ENCODE measurements at regions of chr4 and their contacts with region 1.

Region 1: DNA sequence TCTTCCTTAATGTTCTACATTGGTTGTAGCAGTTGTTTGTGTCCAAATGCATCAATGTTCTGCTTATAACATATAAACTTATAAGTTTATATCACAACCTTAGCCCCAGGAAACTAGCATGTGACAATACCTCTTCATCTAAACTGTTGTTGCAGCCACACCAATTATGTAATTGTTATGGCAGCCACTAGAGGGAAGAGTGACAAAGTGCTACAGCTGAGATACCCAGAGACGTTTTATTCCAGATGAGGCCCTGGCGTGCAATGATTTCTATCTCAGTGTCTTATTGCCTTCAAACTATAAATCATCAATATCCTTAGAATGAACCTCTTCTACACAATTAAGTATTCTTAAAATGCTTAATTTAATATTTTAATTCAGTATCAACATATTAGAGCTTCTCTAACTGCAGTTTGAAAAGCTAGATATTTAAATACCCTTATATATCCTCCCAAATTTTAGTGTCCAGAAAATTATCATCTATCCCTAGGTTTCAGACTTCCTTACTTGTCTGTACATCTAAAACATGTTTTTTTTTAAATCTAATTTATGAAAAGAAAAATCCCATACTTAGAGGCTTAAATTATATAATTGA is 171.6 kb downstream of the PCDH10 start:
- DNase-seq: no peak
- ATAC-seq: peak; percentile 87
- H3K4me3 ChIP-seq: no peak overlapping the region
- H3K27ac ChIP-seq: no peak overlapping the region
- H3K4me1 ChIP-seq: no peaks in the 10 kb centered on the region
- H3K27me3 ChIP-seq: no peaks in the 10 kb centered on the region
- CTCF ChIP-seq: peak; percentile 56 to 60 (median 57)
- EP300 ChIP-seq: no peak
- POLR2A ChIP-seq: no peak
- RAD21 ChIP-seq: peak; percentile 44; the same call in 1 of the 2 replicates

Region 2: DNA sequence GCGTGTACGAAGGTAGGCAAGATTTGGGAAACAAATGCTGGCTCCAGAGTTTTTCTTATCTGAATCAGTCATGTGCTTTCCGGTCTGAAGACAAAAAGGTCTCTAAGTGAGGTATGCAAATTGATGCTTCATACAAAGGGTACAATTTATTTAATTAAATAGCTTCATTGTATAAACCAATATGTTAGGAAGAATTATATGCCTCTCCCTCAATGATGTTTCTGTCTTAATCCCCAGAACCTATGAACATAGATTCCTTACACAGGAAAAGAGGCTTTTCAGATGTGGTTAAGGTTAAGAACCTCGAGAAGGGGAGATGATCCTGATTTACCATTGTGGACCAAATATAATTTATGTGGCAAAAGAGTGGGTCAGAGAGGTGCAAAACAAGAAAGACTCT is 715.1 kb before region 1 on chr4:
- CTCF ChIA-PET with region 1: no interaction called
- POLR2A ChIA-PET with region 1: no interaction called
- RAD21 ChIA-PET with region 1: no interaction called
- SMC1A ChIA-PET with region 1: no interaction called
- in situ Hi-C with region 1: no loop called
- intact Hi-C with region 1: no loop called
- DNase-seq: no peak
- ATAC-seq: no peak
- H3K4me3 ChIP-seq: no peak overlapping the region
- H3K27ac ChIP-seq: no peak overlapping the region
- H3K4me1 ChIP-seq: no peaks in the 10 kb centered on the region
- H3K27me3 ChIP-seq: no peaks in the 10 kb centered on the region
- CTCF ChIP-seq: no peak
- EP300 ChIP-seq: no peak
- POLR2A ChIP-seq: no peak
- RAD21 ChIP-seq: no peak

Region 3: GRCh38 chr4:133154725-133155124 is 165.9 kb before region 1 on chr4:
- CTCF ChIA-PET with region 1: interaction called, 14 read pairs
- POLR2A ChIA-PET with region 1: no interaction called
- RAD21 ChIA-PET with region 1: interaction called, 12 read pairs
- SMC1A ChIA-PET with region 1: interaction called, 4 read pairs
- in situ Hi-C with region 1: no loop called
- intact Hi-C with region 1: no loop called
- DNase-seq: no peak
- ATAC-seq: peak; percentile 65
- H3K4me3 ChIP-seq: no peak overlapping the region
- H3K27ac ChIP-seq: no peak overlapping the region
- H3K4me1 ChIP-seq: no peaks in the 10 kb centered on the region
- H3K27me3 ChIP-seq: peaks cover 5 to 7% of the 10 kb centered on the region in 2 experiments; a peak in 3 of 4 replicates
- CTCF ChIP-seq: peak; percentile 45 to 48 (median 47); a peak in 5 of 6 replicates
- EP300 ChIP-seq: no peak
- POLR2A ChIP-seq: no peak
- RAD21 ChIP-seq: peak; percentile 46

Region 4: GRCh38 chr4:133424605-133425004 is 103.9 kb after region 1 on chr4:
- CTCF ChIA-PET with region 1: no interaction called
- POLR2A ChIA-PET with region 1: no interaction called
- RAD21 ChIA-PET with region 1: no interaction called
- SMC1A ChIA-PET with region 1: no interaction called
- in situ Hi-C with region 1: no loop called
- intact Hi-C with region 1: no loop called
- DNase-seq: no peak
- ATAC-seq: no peak
- H3K4me3 ChIP-seq: no peak overlapping the region
- H3K27ac ChIP-seq: no peak overlapping the region
- H3K4me1 ChIP-seq: no peaks in the 10 kb centered on the region
- H3K27me3 ChIP-seq: no peaks in the 10 kb centered on the region
- CTCF ChIP-seq: no peak
- EP300 ChIP-seq: no peak
- POLR2A ChIP-seq: no peak
- RAD21 ChIP-seq: no peak

Region 5: GRCh38 chr4:133839326-133839725 is 518.7 kb after region 1 on chr4:
- CTCF ChIA-PET with region 1: interaction called, 3 read pairs
- POLR2A ChIA-PET with region 1: no interaction called
- RAD21 ChIA-PET with region 1: interaction called, 10 read pairs
- SMC1A ChIA-PET with region 1: no interaction called
- in situ Hi-C with region 1: no loop called
- intact Hi-C with region 1: no loop called
- DNase-seq: no peak
- ATAC-seq: no peak
- H3K4me3 ChIP-seq: no peak overlapping the region
- H3K27ac ChIP-seq: no peak overlapping the region
- H3K4me1 ChIP-seq: no peaks in the 10 kb centered on the region
- H3K27me3 ChIP-seq: no peaks in the 10 kb centered on the region
- CTCF ChIP-seq: no peak
- EP300 ChIP-seq: no peak
- POLR2A ChIP-seq: no peak
- RAD21 ChIP-seq: no peak

Measured in GM12878 (cell line).